Activated naive CD4-positive, alpha-beta T cell treated with anti-CD3 and anti-CD28 coated beads for 36 hours (primary cell): ENCODE measurements at regions of chr13 and their contacts with region 1.

Region 1: DNA sequence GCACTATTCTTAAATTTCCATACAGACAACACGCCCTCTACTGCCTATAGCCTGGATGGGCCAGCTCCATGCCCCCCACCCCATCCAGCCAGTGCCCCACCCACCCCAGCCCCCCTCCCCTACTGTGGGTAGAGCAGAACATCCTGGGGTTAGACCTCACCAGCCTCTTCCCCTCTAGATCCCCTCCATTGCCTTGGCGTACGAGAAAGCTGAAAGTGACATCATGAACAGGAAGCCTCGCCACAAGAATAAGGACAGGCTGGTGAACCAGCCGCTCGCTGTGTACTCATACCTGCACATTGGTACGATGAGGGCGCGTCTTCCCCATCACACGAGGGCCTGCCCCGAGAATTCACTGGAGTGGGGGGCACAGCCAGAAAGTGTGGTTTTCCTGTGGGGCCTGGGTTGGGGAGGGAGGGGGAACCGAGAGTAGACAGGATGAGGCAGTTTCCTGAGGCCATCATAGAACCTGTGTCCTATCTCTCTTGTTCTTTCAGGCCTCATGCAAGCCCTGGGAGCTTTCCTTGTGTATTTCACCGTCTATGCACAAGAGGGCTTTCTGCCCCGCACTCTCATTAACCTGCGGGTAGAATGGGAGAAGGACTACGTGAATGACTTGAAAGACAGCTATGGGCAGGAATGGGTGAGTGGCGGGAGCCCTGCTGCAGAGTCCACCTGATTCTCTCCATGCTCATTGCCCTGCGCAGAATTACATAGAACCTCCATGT is 29.1 kb downstream of the ATP12A start:
- DNase-seq: peak; percentile 91
- H3K4me3 Mint-ChIP-seq: peak overlapping the region; percentile 17
- H3K27ac Mint-ChIP-seq: peak overlapping the region; percentile 28
- H3K4me1 Mint-ChIP-seq: peaks cover 17% of the 10 kb centered on the region
- H3K27me3 Mint-ChIP-seq: no peaks in the 10 kb centered on the region

Region 2: GRCh38 chr13:24264976-24265375 is 444.4 kb before region 1 on chr13:
- CTCF ChIA-PET with region 1: interaction called, 3 read pairs
- intact Hi-C with region 1: loop called (anchors 5 kb)
- DNase-seq: peak; percentile 94
- H3K4me3 Mint-ChIP-seq: peak overlapping the region; percentile 68
- H3K27ac Mint-ChIP-seq: peak overlapping the region; percentile 98
- H3K4me1 Mint-ChIP-seq: peaks cover 87% of the 10 kb centered on the region
- H3K27me3 Mint-ChIP-seq: no peaks in the 10 kb centered on the region

Region 3: GRCh38 chr13:24564881-24565280 is 144.5 kb before region 1 on chr13:
- CTCF ChIA-PET with region 1: no interaction called
- intact Hi-C with region 1: no loop called
- DNase-seq: no peak
- H3K4me3 Mint-ChIP-seq: no peak overlapping the region
- H3K27ac Mint-ChIP-seq: no peak overlapping the region
- H3K4me1 Mint-ChIP-seq: peaks cover under 1% of the 10 kb centered on the region
- H3K27me3 Mint-ChIP-seq: peaks cover 14% of the 10 kb centered on the region

Region 4: GRCh38 chr13:24618014-24618955 is 91.1 kb before region 1 on chr13:
- CTCF ChIA-PET with region 1: no interaction called
- intact Hi-C with region 1: loop called (anchors 1 kb)
- DNase-seq: peak; percentile 86
- H3K4me3 Mint-ChIP-seq: no peak overlapping the region
- H3K27ac Mint-ChIP-seq: peak overlapping the region; percentile 66
- H3K4me1 Mint-ChIP-seq: peaks cover 25% of the 10 kb centered on the region
- H3K27me3 Mint-ChIP-seq: no peaks in the 10 kb centered on the region

Region 5: DNA sequence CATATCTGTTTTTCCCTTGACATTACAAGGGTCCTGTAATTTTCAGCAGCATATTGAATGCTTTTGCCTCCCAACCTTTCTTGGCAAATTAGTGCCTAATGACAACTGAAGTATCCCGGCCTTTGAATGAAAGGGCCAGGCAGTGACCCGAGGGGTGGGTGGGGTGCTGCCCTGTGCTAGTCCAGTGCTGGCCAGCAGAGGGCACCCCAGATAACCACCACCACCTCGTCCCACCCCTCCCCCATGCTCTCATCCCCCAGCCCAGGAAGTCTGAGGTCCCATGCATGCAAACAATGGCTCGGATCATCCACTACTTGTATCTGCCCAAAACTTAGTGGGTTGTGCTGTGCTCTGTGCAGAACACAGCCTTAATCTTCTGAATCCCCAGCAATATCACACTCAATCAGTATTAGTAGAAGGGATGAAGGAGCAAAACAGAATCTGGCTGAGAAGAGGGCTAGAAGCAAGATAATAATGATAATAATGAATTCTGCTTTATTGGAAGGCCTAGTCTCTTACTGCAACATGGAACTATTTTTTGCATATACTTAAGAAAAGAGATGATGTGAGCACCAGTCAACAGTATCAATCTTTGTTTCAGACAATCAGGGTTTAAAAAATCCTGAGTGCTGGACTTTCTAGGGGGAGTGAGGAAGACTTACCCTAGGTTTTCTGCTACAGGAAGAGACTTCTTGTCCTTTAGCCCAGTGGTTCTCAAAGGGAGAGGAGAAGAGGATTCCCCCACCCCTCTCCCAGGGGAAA is 25.3 kb before region 1 on chr13:
- CTCF ChIA-PET with region 1: interaction called, 7 read pairs
- intact Hi-C with region 1: loop called (anchors 1 kb)
- DNase-seq: peak; percentile 77
- H3K4me3 Mint-ChIP-seq: no peak overlapping the region
- H3K27ac Mint-ChIP-seq: peak overlapping the region; percentile 44
- H3K4me1 Mint-ChIP-seq: peaks cover 31% of the 10 kb centered on the region
- H3K27me3 Mint-ChIP-seq: peaks cover 40% of the 10 kb centered on the region

Region 6: DNA sequence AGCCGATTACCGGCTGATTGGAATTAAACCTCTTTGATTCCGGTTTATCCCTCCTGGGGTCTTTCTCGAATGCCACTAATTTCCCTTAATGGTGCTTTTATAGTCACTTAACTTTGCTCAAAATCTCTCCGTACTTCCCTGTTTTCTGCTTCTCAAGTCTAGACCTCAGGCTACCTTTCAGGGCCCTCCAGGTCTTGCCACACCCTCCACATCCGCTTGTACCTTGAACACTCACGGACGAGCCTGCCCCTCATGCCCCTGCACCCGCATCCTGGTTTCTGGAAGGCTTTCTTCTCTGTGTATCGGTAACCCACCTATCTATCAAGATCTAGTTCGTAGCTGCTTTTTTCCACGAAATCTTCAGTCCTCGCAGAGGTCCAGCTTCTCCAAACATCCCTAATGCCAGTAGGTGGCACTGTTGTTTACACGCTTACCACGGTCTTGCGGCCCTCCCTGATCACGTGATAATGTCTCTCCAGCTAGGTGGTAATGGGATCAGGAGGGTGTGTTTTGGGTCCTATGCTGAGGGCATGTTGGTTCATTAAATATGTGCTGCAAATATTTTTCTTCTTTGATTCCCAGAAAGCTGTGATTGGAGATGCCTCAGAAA is 15.4 kb before region 1 on chr13:
- CTCF ChIA-PET with region 1: interaction called, 29 read pairs
- intact Hi-C with region 1: no loop called
- DNase-seq: peak; percentile 74
- H3K4me3 Mint-ChIP-seq: no peak overlapping the region
- H3K27ac Mint-ChIP-seq: no peak overlapping the region
- H3K4me1 Mint-ChIP-seq: peaks cover 6% of the 10 kb centered on the region
- H3K27me3 Mint-ChIP-seq: peaks cover 33% of the 10 kb centered on the region

Region 7: GRCh38 chr13:24922745-24923591 is 213.6 kb after region 1 on chr13:
- CTCF ChIA-PET with region 1: no interaction called
- intact Hi-C with region 1: loop called (anchors 1 kb)
- DNase-seq: peak; percentile 96
- H3K4me3 Mint-ChIP-seq: peak overlapping the region; percentile 94
- H3K27ac Mint-ChIP-seq: peak overlapping the region; percentile 85
- H3K4me1 Mint-ChIP-seq: peaks cover 8% of the 10 kb centered on the region
- H3K27me3 Mint-ChIP-seq: no peaks in the 10 kb centered on the region